Activated CD4-positive, alpha-beta memory T cell treated with anti-CD3 and anti-CD28 coated beads, Interleukin-2, amount 10 ng/mL, durations not matched to agents 7 days and 5 days (primary cell): ENCODE measurements at regions of chr11 and their contacts with region 1.

Region 1: DNA sequence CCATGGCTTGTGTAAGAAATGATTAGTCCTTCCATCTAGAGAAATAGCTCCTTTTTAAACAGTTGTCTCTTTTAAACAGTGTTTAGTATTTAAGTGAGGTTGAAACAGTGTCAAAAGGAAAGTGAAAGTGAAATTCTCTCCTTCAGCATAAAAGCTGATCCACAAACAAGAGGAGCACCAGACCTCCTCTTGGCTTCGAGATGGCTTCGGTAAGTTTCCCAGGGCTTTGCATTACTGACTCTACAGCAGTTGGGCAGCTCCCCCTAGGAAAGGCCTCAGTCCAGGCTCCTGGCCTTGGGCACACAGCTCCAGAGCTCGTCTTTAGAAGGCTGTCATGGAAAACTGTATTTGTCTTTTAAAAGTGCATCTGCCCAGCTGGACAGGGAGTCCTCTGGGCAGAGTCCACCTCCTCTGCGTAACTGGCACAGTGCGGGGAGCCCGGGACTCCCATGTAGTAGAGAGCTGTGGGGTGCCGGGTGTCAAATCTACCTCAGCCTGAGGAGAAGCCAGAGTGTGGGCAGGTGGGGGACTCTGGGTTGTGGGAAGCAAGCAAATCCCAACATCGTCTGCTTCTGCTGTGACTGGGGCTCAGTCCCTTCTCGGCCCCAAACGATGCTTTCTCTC is at the start of gene PLAAT4:
- DNase-seq: peak; percentile 45
- H3K4me3 Mint-ChIP-seq: peak within 1 kb of the TSS; percentile 80
- H3K27ac Mint-ChIP-seq: peak within 1 kb of the TSS; percentile 77
- H3K4me1 Mint-ChIP-seq: peaks cover 68% of the 10 kb centered on the region
- H3K27me3 Mint-ChIP-seq: no peaks in the 10 kb centered on the region
- total RNA-seq, gene PLAAT4: 104 to 106 TPM

Region 2: GRCh38 chr11:63478896-63479295 is 57.9 kb before region 1 on chr11:
- CTCF ChIA-PET with region 1: interaction called, 11 read pairs
- POLR2A ChIA-PET with region 1: interaction called, 3 read pairs
- DNase-seq: peak; percentile 55
- H3K4me3 Mint-ChIP-seq: no peak overlapping the region
- H3K27ac Mint-ChIP-seq: no peak overlapping the region
- H3K4me1 Mint-ChIP-seq: no peaks in the 10 kb centered on the region
- H3K27me3 Mint-ChIP-seq: peaks cover 25% of the 10 kb centered on the region

Region 3: GRCh38 chr11:63547066-63547465 is 10.3 kb after region 1 on chr11:
- CTCF ChIA-PET with region 1: interaction called, 13 read pairs
- POLR2A ChIA-PET with region 1: interaction called, 53 read pairs
- DNase-seq: no peak
- H3K4me3 Mint-ChIP-seq: no peak overlapping the region
- H3K27ac Mint-ChIP-seq: no peak overlapping the region
- H3K4me1 Mint-ChIP-seq: peaks cover 14% of the 10 kb centered on the region
- H3K27me3 Mint-ChIP-seq: no peaks in the 10 kb centered on the region

Region 4: GRCh38 chr11:63553741-63554151 is 17.0 kb after region 1 on chr11:
- CTCF ChIA-PET with region 1: interaction called, 13 read pairs
- POLR2A ChIA-PET with region 1: interaction called, 53 read pairs
- DNase-seq: peak; percentile 57
- H3K4me3 Mint-ChIP-seq: peak overlapping the region; percentile 46
- H3K27ac Mint-ChIP-seq: peak overlapping the region; percentile 90
- H3K4me1 Mint-ChIP-seq: peaks cover 39% of the 10 kb centered on the region
- H3K27me3 Mint-ChIP-seq: no peaks in the 10 kb centered on the region

Region 5: DNA sequence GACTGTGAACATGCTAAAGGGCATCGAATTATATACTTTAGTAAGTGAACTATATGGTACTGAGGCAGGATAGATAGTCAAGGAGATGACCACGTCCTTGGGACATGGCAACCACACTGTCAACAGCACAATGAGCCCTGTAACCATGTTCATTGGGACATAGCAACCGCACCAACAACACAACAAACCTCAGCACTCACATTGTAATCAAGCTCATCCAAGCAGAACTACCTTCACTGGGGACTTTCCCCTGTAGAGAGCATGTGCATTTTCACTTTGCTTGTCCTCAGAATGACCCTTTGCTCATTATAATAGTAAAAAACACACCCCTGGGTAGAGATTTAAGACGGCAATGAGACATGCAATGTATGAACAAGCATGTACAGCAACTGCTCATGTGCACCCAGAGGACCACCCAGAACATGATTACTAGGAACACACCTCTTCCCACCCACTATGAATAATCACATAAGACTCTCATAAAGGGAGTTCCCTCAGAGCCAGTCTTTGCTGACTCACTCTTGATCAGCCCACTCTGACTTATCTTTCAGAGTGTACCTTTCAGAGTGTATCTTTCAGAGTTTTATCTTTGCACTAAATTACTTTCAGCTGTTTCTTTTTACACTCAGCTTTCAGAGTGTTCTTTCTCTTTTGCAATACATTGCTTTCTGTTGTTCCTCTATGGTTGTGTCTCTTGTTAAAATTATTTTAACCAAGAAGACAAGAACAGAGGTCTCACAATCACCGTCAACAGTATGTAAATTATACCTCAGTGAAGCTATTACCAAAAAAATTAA is 30.5 kb after region 1 on chr11:
- CTCF ChIA-PET with region 1: interaction called, 5 read pairs
- POLR2A ChIA-PET with region 1: interaction called, 22 read pairs
- DNase-seq: peak; percentile 72
- H3K4me3 Mint-ChIP-seq: peak overlapping the region; percentile 44
- H3K27ac Mint-ChIP-seq: peak overlapping the region; percentile 78
- H3K4me1 Mint-ChIP-seq: peaks cover 49% of the 10 kb centered on the region
- H3K27me3 Mint-ChIP-seq: peaks cover 5% of the 10 kb centered on the region

Region 6: GRCh38 chr11:63573881-63574855 is 37.4 kb after region 1 on chr11:
- CTCF ChIA-PET with region 1: interaction called, 3 read pairs
- POLR2A ChIA-PET with region 1: interaction called, 11 read pairs
- DNase-seq: peak; percentile 54
- H3K4me3 Mint-ChIP-seq: peak overlapping the region; percentile 64
- H3K27ac Mint-ChIP-seq: peak overlapping the region; percentile 81
- H3K4me1 Mint-ChIP-seq: peaks cover 22% of the 10 kb centered on the region
- H3K27me3 Mint-ChIP-seq: peaks cover 5% of the 10 kb centered on the region